ENCODE measurements at regions of chr4 and their contacts with region 1.

Region 1: GRCh38 chr4:155787113-155787710 is 28.4 kb downstream of the GUCY1B1 start:
- DNase-seq: peak; percentile 18
- H3K4me3 ChIP-seq: no peak overlapping the region
- H3K27ac ChIP-seq: no peak overlapping the region
- H3K4me1 ChIP-seq: no peaks in the 10 kb centered on the region
- CTCF ChIP-seq: peak; percentile 74

Region 2: DNA sequence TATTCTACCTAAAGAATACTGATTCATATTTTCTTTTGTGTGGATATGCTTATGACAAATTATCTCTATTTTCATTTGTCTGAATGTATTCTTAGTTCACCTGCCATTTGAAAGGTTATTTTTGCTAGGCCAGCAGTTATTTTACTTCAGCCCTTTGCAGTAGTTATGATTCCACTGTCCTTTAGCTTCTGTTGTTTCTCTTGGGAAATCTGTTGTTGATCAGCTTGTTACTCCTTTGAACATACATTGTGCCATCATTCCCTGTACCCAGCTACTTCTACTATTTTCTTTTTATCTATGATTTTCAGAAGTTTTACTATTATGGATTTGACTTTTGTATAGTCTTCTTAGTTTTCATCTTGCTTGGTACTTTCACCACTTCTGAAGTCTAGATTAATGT is 969.0 kb before region 1 on chr4:
- CTCF ChIA-PET with region 1: no interaction called
- POLR2A ChIA-PET with region 1: no interaction called
- intact Hi-C with region 1: loop called (anchors 10 kb)
- DNase-seq: no peak
- H3K4me3 ChIP-seq: no peak overlapping the region
- H3K27ac ChIP-seq: no peak overlapping the region
- H3K4me1 ChIP-seq: no peaks in the 10 kb centered on the region
- CTCF ChIP-seq: no peak

Region 3: GRCh38 chr4:155442267-155443105 is 344.7 kb before region 1 on chr4:
- CTCF ChIA-PET with region 1: no interaction called
- POLR2A ChIA-PET with region 1: interaction called, 3 read pairs
- intact Hi-C with region 1: loop called (anchors 2 kb)
- DNase-seq: peak; percentile 41
- H3K4me3 ChIP-seq: no peak overlapping the region
- H3K27ac ChIP-seq: no peak overlapping the region
- H3K4me1 ChIP-seq: no peaks in the 10 kb centered on the region
- CTCF ChIP-seq: peak; percentile 94

Region 4: GRCh38 chr4:155769090-155769489 is 18.1 kb before region 1 on chr4:
- CTCF ChIA-PET with region 1: no interaction called
- POLR2A ChIA-PET with region 1: no interaction called
- intact Hi-C with region 1: no loop called
- DNase-seq: no peak
- H3K4me3 ChIP-seq: no peak overlapping the region
- H3K27ac ChIP-seq: no peak overlapping the region
- H3K4me1 ChIP-seq: no peaks in the 10 kb centered on the region
- CTCF ChIP-seq: no peak

Measured in OCI-LY7 (cell line).